Natural killer cell (primary cell): ENCODE measurements at regions of chr20 and their contacts with region 1.

Region 1: GRCh38 chr20:10553326-10553984 is 118.3 kb downstream of the SLX4IP start:
- DNase-seq: peak in 1 of 2 donors; percentile 52
- ATAC-seq: peak; percentile 62 to 80 (median 79)
- H3K4me3 ChIP-seq: no peak overlapping the region
- H3K4me3 Mint-ChIP-seq: no peak overlapping the region
- H3K27ac ChIP-seq: no peak overlapping the region
- H3K27ac Mint-ChIP-seq: no peak overlapping the region
- H3K4me1 ChIP-seq: peaks cover 16% of the 10 kb centered on the region
- H3K4me1 Mint-ChIP-seq: peaks cover 33 to 35% of the 10 kb centered on the region in 2 donors
- H3K27me3 ChIP-seq: no peaks in the 10 kb centered on the region
- H3K27me3 Mint-ChIP-seq: no peaks in the 10 kb centered on the region
- CTCF ChIP-seq: peak; percentile 70

Region 2: DNA sequence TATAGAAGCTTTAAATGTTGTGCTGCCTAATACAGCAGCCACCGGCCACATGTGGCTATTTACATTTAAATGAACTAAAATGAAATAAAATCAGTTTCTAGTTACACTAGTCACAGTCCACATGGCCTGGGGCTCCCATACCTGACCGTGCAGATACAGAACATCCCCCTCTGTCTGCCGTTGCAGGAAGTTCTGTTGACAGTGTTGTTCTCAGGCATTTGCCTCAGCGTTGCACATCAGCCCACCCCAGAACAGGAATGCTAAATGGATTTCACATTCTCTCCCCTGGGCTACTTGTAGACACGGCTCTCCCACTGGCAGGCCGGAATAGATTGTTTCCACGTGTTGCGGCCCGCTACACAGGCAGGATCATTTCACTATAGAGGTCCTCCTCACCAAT is 94.0 kb after region 1 on chr20:
- intact Hi-C with region 1: loop called (anchors 1 kb)
- DNase-seq: peak in 1 of 2 donors; percentile 15
- ATAC-seq: peak; percentile 37 to 64 (median 62)
- H3K4me3 ChIP-seq: no peak overlapping the region
- H3K4me3 Mint-ChIP-seq: no peak overlapping the region
- H3K27ac ChIP-seq: no peak overlapping the region
- H3K27ac Mint-ChIP-seq: no peak overlapping the region
- H3K4me1 ChIP-seq: no peaks in the 10 kb centered on the region
- H3K4me1 Mint-ChIP-seq: peaks cover 0 to 9% of the 10 kb centered on the region in 2 donors
- H3K27me3 ChIP-seq: no peaks in the 10 kb centered on the region
- H3K27me3 Mint-ChIP-seq: no peaks in the 10 kb centered on the region
- CTCF ChIP-seq: peak; percentile 21

Region 3: GRCh38 chr20:10758446-10758845 is 205.0 kb after region 1 on chr20:
- intact Hi-C with region 1: no loop called
- DNase-seq: no peak
- ATAC-seq: no peak
- H3K4me3 ChIP-seq: no peak overlapping the region
- H3K4me3 Mint-ChIP-seq: no peak overlapping the region
- H3K27ac ChIP-seq: no peak overlapping the region
- H3K27ac Mint-ChIP-seq: no peak overlapping the region
- H3K4me1 ChIP-seq: no peaks in the 10 kb centered on the region
- H3K4me1 Mint-ChIP-seq: no peaks in the 10 kb centered on the region
- H3K27me3 ChIP-seq: peaks cover 2% of the 10 kb centered on the region
- H3K27me3 Mint-ChIP-seq: peaks cover 21% of the 10 kb centered on the region in 2 donors
- CTCF ChIP-seq: no peak

Region 4: GRCh38 chr20:11204926-11205768 is 651.7 kb after region 1 on chr20:
- intact Hi-C with region 1: loop called (anchors 5 kb)
- DNase-seq: peak in 1 of 2 donors; percentile 35
- ATAC-seq: peak in 1 of 3 donors; percentile 60
- H3K4me3 ChIP-seq: no peak overlapping the region
- H3K4me3 Mint-ChIP-seq: no peak overlapping the region
- H3K27ac ChIP-seq: no peak overlapping the region
- H3K27ac Mint-ChIP-seq: no peak overlapping the region
- H3K4me1 ChIP-seq: no peaks in the 10 kb centered on the region
- H3K4me1 Mint-ChIP-seq: no peaks in the 10 kb centered on the region
- H3K27me3 ChIP-seq: no peaks in the 10 kb centered on the region
- H3K27me3 Mint-ChIP-seq: peaks cover 0 to 12% of the 10 kb centered on the region in 2 donors
- CTCF ChIP-seq: peak; percentile 42